AG04450 (cell line): ENCODE measurements at regions of chr3 and their contacts with region 1.

Region 1: GRCh38 chr3:56801662-56802377 is at the start of gene ARHGEF3:
- DNase-seq: no peak
- H3K4me3 ChIP-seq: peak within 1 kb of the TSS; percentile 69
- H3K27ac ChIP-seq: no peak within 1 kb of the TSS
- H3K27me3 ChIP-seq: peaks cover 4% of the 10 kb centered on the region
- CTCF ChIP-seq: peak; percentile 39
- polyA plus RNA-seq, gene ARHGEF3: 4.9 and 5.6 TPM in 2 replicates

Region 2: DNA sequence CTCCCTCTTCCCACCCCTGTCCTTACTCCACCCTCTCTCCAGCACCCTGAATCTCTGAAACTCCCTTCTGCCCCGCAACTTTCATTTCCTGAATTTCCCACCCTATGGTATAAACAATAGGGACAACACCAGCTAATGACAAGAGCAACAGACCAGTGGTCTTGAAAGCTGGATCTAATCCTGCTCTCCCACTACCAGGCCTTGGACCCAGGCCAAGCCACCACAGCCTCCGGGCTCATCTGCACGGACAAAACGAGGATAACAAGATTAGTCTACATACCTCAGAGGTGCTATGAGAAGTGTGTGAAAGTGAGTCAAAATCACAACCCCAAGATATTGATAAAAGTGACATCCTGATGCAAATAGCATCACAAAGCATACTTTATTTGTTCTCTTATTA is 462.1 kb before region 1 on chr3:
- CTCF ChIA-PET with region 1: no interaction called
- POLR2A ChIA-PET with region 1: no interaction called
- DNase-seq: no peak
- H3K4me3 ChIP-seq: no peak overlapping the region
- H3K27ac ChIP-seq: no peak overlapping the region
- H3K27me3 ChIP-seq: no peaks in the 10 kb centered on the region
- CTCF ChIP-seq: no peak

Region 3: GRCh38 chr3:56624725-56625124 is 177.1 kb before region 1 on chr3:
- CTCF ChIA-PET with region 1: no interaction called
- POLR2A ChIA-PET with region 1: no interaction called
- DNase-seq: no peak
- H3K4me3 ChIP-seq: no peak overlapping the region
- H3K27ac ChIP-seq: no peak overlapping the region
- H3K27me3 ChIP-seq: no peaks in the 10 kb centered on the region
- CTCF ChIP-seq: no peak

Region 4: GRCh38 chr3:56702490-56703315 is 99.1 kb before region 1 on chr3:
- CTCF ChIA-PET with region 1: interaction called, 179 read pairs
- POLR2A ChIA-PET with region 1: no interaction called
- DNase-seq: peak; percentile 46
- H3K4me3 ChIP-seq: no peak overlapping the region
- H3K27ac ChIP-seq: no peak overlapping the region
- H3K27me3 ChIP-seq: no peaks in the 10 kb centered on the region
- CTCF ChIP-seq: peak; percentile 84

Region 5: GRCh38 chr3:56758539-56758981 is 43.3 kb before region 1 on chr3:
- CTCF ChIA-PET with region 1: interaction called, 29 read pairs
- POLR2A ChIA-PET with region 1: interaction called, 12 read pairs
- DNase-seq: peak; percentile 68
- H3K4me3 ChIP-seq: peak overlapping the region; percentile 1
- H3K27ac ChIP-seq: peak overlapping the region; percentile 53
- H3K27me3 ChIP-seq: no peaks in the 10 kb centered on the region
- CTCF ChIP-seq: no peak

Region 6: GRCh38 chr3:56783644-56784447 is 18.0 kb before region 1 on chr3:
- CTCF ChIA-PET with region 1: interaction called, 89 read pairs
- POLR2A ChIA-PET with region 1: interaction called, 4 read pairs
- DNase-seq: peak; percentile 66
- H3K4me3 ChIP-seq: no peak overlapping the region
- H3K27ac ChIP-seq: peak overlapping the region; percentile 73
- H3K27me3 ChIP-seq: peaks cover 5% of the 10 kb centered on the region
- CTCF ChIP-seq: no peak

Region 7: DNA sequence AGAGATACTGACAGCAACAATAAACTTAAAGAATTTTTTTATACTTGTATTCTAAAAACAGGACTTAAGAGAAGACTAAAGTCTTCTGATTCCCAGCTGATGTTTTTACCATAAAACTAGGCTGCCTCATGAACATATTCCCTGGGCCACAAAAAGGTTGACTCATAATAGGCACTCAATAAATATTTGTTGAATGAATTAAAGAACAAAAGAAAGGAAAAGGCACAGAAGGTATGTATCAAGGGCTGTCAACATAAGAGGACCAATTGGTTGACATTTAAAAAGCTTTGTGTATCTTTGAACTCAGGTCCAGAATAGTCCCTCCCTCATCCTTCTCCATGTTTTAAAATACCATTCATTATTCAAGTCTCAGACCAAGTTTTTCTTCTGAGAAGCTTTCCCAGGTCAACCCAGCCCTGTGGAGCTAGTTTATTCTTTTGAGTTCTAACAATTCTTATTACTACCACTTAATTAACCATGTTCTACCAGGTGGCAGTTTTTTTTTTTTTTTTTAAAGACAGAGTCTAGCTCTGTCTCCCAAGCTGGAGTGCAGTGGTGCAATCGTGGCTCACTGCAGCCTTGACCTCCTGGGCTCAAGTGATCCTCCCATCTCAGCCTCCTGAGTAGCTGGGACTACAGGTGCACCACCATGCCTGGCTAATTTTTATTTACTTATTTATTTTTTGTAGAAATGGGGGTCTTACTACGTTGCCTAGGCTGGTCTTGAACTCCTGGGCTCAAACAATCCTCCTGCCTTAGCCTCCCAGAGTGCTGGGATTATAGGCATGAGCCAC is 17.4 kb after region 1 on chr3:
- CTCF ChIA-PET with region 1: interaction called, 68 read pairs
- POLR2A ChIA-PET with region 1: no interaction called
- DNase-seq: no peak
- H3K4me3 ChIP-seq: no peak overlapping the region
- H3K27ac ChIP-seq: no peak overlapping the region
- H3K27me3 ChIP-seq: peaks cover 9% of the 10 kb centered on the region
- CTCF ChIP-seq: no peak

Region 8: DNA sequence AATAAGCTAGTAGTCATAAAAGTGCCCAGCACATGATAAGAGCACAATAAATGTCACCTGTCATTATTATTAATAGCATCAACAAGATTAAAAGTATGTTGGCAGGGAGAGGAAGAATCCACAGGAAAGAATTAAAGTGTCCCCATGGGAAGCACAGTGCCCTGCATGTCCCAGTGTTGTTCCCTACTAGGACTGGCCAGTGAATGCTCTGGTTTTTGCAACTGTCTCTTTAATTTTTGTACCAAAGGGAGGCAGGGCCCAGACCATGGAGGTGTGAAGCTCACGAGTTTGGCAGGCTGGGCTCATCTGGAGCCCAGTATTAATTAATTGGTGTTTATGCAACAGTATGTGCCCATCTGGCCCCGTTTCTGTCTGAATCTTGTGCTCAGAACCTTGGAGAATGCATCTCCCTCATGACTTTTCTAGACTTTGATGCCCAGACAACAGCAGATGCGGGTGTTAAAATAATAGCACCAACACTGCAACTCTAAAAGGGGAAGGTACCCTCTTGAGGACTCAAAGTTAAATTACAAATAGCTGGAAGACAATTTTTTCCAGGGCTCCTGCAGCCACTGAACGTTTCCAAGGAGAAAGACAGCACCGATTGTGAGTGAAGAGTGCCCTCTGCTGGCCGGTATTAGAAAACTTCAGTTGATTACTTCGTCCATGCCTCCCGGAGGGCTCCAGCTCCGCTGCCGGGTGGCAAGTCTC is 186.8 kb after region 1 on chr3:
- CTCF ChIA-PET with region 1: interaction called, 76 read pairs
- POLR2A ChIA-PET with region 1: interaction called, 3 read pairs
- DNase-seq: peak; percentile 58
- H3K4me3 ChIP-seq: no peak overlapping the region
- H3K27ac ChIP-seq: no peak overlapping the region
- H3K27me3 ChIP-seq: peaks cover 15% of the 10 kb centered on the region
- CTCF ChIP-seq: peak; percentile 75

Region 9: GRCh38 chr3:57007513-57008460 is 206.0 kb after region 1 on chr3:
- CTCF ChIA-PET with region 1: interaction called, 12 read pairs
- POLR2A ChIA-PET with region 1: no interaction called
- DNase-seq: peak; percentile 61
- H3K4me3 ChIP-seq: peak overlapping the region; percentile 18
- H3K27ac ChIP-seq: peak overlapping the region; percentile 91
- H3K27me3 ChIP-seq: peaks cover 2% of the 10 kb centered on the region
- CTCF ChIP-seq: no peak